ENCODE measurements at regions of chr16 and their contacts with region 1.

Region 1: GRCh38 chr16:88700636-88701482 is 5.3 kb downstream of the RNF166 start:
- DNase-seq: peak; percentile 93
- H3K4me3 Mint-ChIP-seq: peak overlapping the region; percentile 83
- H3K27ac Mint-ChIP-seq: peak overlapping the region; percentile 94
- H3K4me1 Mint-ChIP-seq: peaks cover 50% of the 10 kb centered on the region
- H3K27me3 Mint-ChIP-seq: no peaks in the 10 kb centered on the region

Region 2: GRCh38 chr16:88331989-88332920 is 368.6 kb before region 1 on chr16:
- intact Hi-C with region 1: no loop called
- DNase-seq: no peak
- H3K4me3 Mint-ChIP-seq: no peak overlapping the region
- H3K27ac Mint-ChIP-seq: no peak overlapping the region
- H3K4me1 Mint-ChIP-seq: peaks cover 5% of the 10 kb centered on the region
- H3K27me3 Mint-ChIP-seq: no peaks in the 10 kb centered on the region

Region 3: DNA sequence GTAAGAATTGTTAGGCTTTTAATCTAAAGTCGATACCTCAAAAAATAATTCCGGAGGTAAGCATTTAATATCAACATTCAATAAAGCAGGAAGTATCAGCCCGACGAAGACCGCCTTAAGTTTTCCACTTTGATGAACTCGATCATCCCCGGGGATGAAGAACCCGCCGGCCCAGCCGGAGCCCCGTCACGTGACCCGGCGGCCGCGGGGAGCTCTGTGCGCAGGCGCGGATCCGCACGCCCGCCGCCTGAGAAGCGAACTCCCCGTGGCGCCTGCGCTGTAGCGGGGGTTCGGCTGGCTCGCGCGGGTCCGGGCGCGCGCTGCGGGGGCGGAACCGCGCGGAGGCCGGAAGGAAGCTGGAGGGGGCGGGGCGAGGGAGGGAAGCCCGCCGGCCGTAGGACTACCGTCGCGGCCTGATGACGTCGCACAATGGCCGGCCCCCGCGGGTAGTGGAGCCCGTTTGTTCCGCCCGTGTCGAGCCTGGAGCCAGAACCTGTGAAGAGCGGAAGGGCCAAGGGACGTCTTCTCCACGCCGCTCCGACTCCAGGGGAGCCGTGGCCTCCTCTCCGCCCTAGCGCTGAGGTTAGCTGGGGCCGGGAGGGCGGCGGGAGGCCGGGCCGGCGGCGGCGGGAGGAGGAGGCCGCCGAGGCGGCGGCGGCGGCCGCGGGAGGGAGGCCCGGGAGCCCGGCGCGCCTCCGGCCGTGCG is 130.7 kb before region 1 on chr16 and contains the start of gene ZC3H18:
- intact Hi-C with region 1: loop called (anchors 5 kb)
- DNase-seq: peak; percentile 94
- H3K4me3 Mint-ChIP-seq: peak within 1 kb of the TSS; percentile 89
- H3K27ac Mint-ChIP-seq: peak within 1 kb of the TSS; percentile 87
- H3K4me1 Mint-ChIP-seq: peaks cover 27% of the 10 kb centered on the region
- H3K27me3 Mint-ChIP-seq: no peaks in the 10 kb centered on the region
- total RNA-seq, gene ZC3H18: 93.9 and 101 TPM in 2 replicates

Region 4: GRCh38 chr16:88686439-88687253 is 14.2 kb before region 1 on chr16 and contains the start of gene SNAI3:
- intact Hi-C with region 1: loop called (anchors 1 kb)
- DNase-seq: peak; percentile 85
- H3K4me3 Mint-ChIP-seq: peak within 1 kb of the TSS; percentile 74
- H3K27ac Mint-ChIP-seq: no peak within 1 kb of the TSS
- H3K4me1 Mint-ChIP-seq: peaks cover 32% of the 10 kb centered on the region
- H3K27me3 Mint-ChIP-seq: no peaks in the 10 kb centered on the region
- total RNA-seq, gene SNAI3: 2.0 and 2.3 TPM in 2 replicates

Region 5: DNA sequence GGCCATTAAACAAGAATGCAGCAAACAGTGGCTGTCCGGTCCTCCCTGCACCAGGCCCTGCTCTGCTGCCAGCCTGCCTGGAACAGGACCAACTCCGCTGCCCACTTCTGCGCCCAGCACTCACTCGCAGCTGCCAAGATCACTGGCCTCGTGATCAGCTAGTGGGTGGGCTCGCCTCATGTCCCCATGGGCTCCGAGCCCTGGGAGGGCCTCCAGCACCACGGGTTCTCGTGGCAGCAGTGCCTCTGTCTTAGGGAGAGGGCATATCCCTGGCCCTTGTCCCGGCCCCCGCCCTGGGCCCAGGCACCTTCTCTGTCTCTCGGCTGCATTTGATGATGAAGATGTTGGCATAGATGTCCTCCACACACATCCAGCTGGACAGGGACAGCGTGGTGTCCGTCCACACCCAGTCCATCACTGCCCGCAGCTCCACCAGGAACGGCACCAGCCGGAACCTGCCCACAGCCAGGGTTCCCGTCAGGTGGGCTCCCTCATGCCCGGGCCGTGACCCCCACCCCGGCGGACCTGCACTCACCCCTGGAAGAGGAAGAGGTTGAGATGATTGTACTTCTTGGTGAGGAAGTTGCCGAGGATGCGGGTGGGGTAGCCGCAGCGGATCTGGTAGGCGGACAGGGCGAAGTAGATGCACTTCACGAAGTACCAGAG is 18.5 kb after region 1 on chr16:
- intact Hi-C with region 1: no loop called
- DNase-seq: no peak
- H3K4me3 Mint-ChIP-seq: no peak overlapping the region
- H3K27ac Mint-ChIP-seq: no peak overlapping the region
- H3K4me1 Mint-ChIP-seq: no peaks in the 10 kb centered on the region
- H3K27me3 Mint-ChIP-seq: no peaks in the 10 kb centered on the region

Region 6: GRCh38 chr16:88803264-88803987 is 102.6 kb after region 1 on chr16 and contains the start of gene CDT1:
- intact Hi-C with region 1: loop called (anchors 5 kb)
- DNase-seq: peak; percentile 83
- H3K4me3 Mint-ChIP-seq: peak within 1 kb of the TSS; percentile 85
- H3K27ac Mint-ChIP-seq: peak within 1 kb of the TSS; percentile 84
- H3K4me1 Mint-ChIP-seq: peaks cover 18% of the 10 kb centered on the region
- H3K27me3 Mint-ChIP-seq: no peaks in the 10 kb centered on the region
- total RNA-seq, gene CDT1: 79.9 and 90.9 TPM in 2 replicates